PC-3 (cell line): ENCODE measurements at regions of chr5 and their contacts with region 1.

Region 1: DNA sequence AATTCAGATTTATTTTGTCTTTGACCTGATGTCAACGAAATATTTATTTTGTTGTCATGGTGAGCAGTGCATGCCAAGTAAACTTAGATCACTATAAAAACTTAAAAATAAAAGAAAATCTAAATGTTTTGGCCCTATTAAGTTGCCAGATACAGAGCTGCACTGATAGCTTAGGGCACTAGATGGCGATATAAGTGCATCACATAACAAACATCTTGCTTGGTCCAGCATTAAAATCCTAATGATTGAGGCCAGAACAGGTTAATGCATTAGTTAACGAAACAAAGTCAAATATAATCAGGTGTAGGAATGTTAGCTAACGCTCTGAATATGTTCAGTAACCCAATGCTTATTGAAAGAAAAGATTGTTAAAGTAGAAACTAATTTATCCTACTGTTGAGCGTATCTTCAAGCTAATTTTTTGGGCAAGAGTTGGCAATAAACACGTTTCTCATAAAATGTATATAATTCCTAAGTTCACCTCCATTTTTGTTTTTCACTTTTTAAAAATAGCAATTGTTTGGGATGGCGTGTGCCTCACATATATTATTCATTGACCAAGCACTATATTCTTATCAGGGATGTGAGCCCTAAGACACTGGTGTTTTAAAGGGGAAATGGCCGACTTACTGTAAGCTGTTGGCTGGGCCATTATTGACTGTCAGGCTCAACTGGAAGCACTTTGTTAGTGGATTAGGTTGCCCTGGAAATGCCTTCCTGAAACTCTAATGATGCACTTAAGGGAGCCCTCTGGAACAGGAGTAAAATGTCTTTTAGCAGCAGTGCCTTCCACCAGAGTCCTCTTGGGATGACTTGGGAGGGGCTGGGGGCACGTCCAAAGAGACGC is 33.3 kb downstream of the KCTD16 start:
- DNase-seq: peak; percentile 73
- ATAC-seq: peak; percentile 76
- H3K4me3 ChIP-seq: no peak overlapping the region
- H3K27ac ChIP-seq: no peak overlapping the region
- H3K4me1 ChIP-seq: peaks cover 4% of the 10 kb centered on the region; the same call in 1 of the 2 replicates
- H3K27me3 ChIP-seq: peaks cover 40% of the 10 kb centered on the region
- CTCF ChIP-seq: peak; percentile 84

Region 2: DNA sequence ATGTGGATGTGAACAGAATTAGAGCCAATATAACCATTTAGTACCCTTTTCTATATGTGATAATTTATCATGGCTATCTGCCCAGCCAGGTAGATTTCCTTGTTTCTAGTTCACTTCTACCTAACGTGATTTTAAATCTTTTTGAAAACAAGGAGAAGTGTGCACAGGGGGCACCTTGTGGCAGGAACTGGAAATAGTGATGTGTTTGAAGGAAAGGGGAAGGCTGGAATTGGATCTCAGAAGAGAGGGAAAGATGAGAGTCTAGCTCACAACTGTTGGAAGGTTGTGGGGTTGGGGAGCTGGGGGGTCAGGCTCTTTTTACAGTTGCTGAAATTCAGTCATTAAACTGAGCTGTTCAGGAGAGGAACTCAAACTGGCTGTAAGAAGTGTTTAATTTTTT is 186.2 kb after region 1 on chr5:
- CTCF ChIA-PET with region 1: no interaction called
- POLR2A ChIA-PET with region 1: no interaction called
- intact Hi-C with region 1: loop called (anchors 1 kb)
- DNase-seq: peak; percentile 14
- ATAC-seq: 0 out of 2 replicates have a peak, but pooled peaks have one; percentile 31
- H3K4me3 ChIP-seq: no peak overlapping the region
- H3K27ac ChIP-seq: no peak overlapping the region
- H3K4me1 ChIP-seq: no peaks in the 10 kb centered on the region
- H3K27me3 ChIP-seq: no peaks in the 10 kb centered on the region
- CTCF ChIP-seq: peak; percentile 48

Region 3: DNA sequence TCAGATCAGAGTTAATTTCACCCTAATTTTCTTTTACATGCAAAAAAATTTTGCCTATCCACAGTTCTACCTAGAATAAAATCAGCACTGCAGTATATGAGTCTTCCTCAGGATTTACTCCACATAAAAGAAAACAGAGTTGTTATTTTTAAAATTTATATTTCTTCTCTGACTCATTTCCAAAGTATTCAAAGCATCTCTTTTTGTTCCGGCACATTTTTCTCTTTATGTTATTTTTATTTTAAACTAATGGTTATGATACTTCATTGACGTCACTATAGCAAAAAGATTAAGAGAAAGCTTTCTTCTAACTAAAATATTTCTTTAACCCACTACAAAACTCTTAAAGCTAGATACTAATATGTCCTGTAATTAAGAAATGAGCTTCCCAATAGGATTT is 1040.8 kb after region 1 on chr5:
- CTCF ChIA-PET with region 1: no interaction called
- POLR2A ChIA-PET with region 1: no interaction called
- intact Hi-C with region 1: loop called (anchors 5 kb)
- DNase-seq: peak; percentile 40
- ATAC-seq: no peak; the same call in 1 of the 2 replicates
- H3K4me3 ChIP-seq: no peak overlapping the region
- H3K27ac ChIP-seq: no peak overlapping the region
- H3K4me1 ChIP-seq: peaks cover 36% of the 10 kb centered on the region
- H3K27me3 ChIP-seq: no peaks in the 10 kb centered on the region
- CTCF ChIP-seq: no peak

Region 4: DNA sequence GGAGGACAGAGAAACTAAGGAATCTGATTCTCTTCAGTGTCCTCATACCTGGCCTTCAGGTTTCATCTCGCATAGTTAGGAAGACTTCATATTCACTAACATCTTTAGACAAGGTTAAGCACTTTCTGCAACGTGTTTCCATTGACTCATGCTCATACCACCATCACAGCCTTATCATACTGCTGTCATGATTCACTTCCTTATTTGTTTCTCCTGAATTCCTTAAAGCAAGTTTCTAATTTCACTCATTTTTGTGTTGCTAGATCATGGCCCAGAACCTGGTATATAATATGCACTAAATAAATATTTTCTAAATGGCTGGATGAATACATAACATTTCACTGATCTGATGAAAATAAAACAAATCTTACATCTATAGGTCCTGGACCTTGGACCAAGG is 1158.3 kb after region 1 on chr5:
- CTCF ChIA-PET with region 1: no interaction called
- POLR2A ChIA-PET with region 1: no interaction called
- intact Hi-C with region 1: loop called (anchors 5 kb)
- DNase-seq: peak; percentile 75
- ATAC-seq: peak; percentile 97
- H3K4me3 ChIP-seq: no peak overlapping the region
- H3K27ac ChIP-seq: peak overlapping the region; percentile 11; the same call in 1 of the 2 replicates
- H3K4me1 ChIP-seq: peaks cover 15% of the 10 kb centered on the region
- H3K27me3 ChIP-seq: no peaks in the 10 kb centered on the region
- CTCF ChIP-seq: no peak

Region 5: DNA sequence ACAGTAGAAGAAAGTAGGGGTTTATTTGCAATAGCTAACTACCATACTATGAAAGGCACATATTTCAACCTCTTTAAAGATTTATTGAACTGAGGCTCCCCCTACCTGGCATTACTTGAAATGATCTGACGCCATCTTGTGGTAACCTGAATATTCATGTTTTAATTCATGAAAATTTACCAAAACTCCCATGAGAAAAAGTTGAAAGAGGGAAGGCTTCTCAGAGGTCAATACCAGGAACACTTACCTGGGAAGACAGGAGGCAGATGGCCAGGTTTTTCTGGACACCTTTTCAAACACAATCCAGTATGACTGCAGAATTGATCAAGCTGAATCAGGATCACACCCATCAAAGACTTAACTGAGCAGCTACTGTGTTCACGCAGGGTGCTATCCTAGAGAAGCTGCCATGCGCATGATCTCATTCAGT is 1621.8 kb after region 1 on chr5:
- CTCF ChIA-PET with region 1: interaction called, 4 read pairs
- POLR2A ChIA-PET with region 1: no interaction called
- intact Hi-C with region 1: loop called (anchors 2 kb)
- DNase-seq: peak; percentile 66
- ATAC-seq: peak; percentile 58
- H3K4me3 ChIP-seq: no peak overlapping the region
- H3K27ac ChIP-seq: no peak overlapping the region
- H3K4me1 ChIP-seq: peaks cover 14% of the 10 kb centered on the region; the same call in 1 of the 2 replicates
- H3K27me3 ChIP-seq: no peaks in the 10 kb centered on the region
- CTCF ChIP-seq: peak; percentile 91

Region 6: DNA sequence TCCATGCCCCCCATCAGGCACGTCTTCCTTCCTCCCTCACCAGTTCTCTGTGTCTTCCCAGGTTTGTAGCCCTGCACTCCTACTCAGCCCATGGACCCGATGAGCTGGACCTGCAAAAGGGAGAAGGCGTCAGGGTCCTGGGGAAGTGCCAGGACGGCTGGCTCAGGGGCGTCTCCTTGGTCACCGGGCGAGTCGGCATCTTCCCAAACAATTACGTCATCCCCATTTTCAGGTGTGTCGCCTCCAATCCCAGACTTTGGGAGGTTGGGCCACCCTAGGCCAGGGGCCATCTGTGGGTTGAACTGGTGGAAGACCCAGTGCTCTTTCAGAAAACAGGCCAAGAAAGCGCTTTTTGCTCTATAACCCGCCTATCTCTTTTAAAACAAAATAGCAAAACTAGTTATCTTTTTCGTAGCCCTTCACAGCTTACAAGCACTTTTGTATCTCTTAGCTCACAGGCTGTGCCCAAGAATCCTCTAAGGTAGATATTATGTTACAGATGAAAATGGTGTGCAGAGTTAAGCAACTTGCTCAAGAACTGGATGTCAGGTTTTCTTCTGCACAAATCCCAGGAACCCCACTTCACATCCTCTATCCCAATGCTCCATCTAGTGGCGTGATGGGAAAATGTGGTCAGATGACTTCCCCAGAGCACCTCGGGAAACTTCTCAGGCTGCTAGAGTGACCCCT is 1845.2 kb after region 1 on chr5:
- CTCF ChIA-PET with region 1: no interaction called
- POLR2A ChIA-PET with region 1: no interaction called
- intact Hi-C with region 1: loop called (anchors 5 kb)
- DNase-seq: peak; percentile 92
- ATAC-seq: peak; percentile 75
- H3K4me3 ChIP-seq: no peak overlapping the region
- H3K27ac ChIP-seq: no peak overlapping the region
- H3K4me1 ChIP-seq: peaks cover 20% of the 10 kb centered on the region; the same call in 1 of the 2 replicates
- H3K27me3 ChIP-seq: no peaks in the 10 kb centered on the region
- CTCF ChIP-seq: peak; percentile 96